ENCODE measurements at regions of chr2 and their contacts with region 1.

Region 1: GRCh38 chr2:188291617-188292347 is at the start of gene GULP1:
- DNase-seq: peak; percentile 70

Region 2: DNA sequence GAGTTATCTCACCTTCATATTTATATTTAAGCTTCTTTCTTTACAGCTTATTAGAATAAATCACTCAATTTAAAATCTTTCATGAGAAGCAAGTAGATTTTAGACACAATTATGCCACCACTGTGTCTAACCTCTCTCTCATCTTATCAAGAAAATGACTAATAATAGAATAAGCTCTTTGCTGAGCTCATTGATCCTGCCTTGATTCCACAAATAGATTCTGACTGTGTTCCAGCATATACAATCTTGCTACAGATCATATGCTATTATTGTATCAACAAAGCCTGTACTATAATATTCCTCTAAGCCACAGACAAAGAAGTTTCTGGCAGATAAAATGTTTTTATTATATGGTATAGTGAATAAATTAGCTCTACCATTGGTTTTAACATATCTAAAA is 168.8 kb before region 1 on chr2:
- CTCF ChIA-PET with region 1: no interaction called
- POLR2A ChIA-PET with region 1: no interaction called
- DNase-seq: no peak

Region 3: GRCh38 chr2:188181067-188181838 is 110.5 kb before region 1 on chr2:
- CTCF ChIA-PET with region 1: no interaction called
- POLR2A ChIA-PET with region 1: no interaction called
- DNase-seq: no peak

Region 4: GRCh38 chr2:188280811-188281222 is 11.0 kb before region 1 on chr2:
- CTCF ChIA-PET with region 1: interaction called, 6 read pairs
- POLR2A ChIA-PET with region 1: interaction called, 14 read pairs
- DNase-seq: no peak

Region 5: DNA sequence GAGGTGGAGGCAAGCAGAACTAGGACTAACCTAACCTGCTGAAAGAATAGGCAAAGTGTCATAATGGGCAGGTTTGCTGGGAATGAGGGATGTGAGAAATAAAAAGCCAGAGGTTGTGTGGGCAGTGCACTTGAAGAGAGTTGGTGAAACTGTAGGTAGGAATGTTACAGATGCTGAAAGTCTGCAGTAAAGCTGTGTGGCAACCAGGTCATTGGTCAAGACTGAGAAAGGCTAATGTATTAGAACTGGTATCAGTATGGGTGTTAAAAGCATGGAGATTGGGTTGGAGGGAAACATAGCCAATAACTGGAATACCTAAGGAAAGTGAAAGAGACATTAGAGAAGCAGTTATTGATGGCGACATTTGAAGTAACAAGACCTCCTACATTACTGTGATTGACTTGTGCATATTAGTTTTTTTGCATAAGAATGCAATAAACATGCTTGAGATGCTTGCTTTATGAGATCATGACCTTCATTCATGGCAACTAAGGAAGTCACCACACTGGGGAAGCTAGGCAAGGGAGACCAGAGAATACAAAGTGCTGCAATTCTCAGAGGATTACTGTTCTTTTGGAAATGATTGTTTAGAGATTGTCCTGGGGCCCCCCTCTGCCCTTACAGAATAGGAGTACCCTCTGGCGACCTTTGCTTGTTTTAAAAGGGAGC is 11.7 kb after region 1 on chr2:
- CTCF ChIA-PET with region 1: no interaction called
- POLR2A ChIA-PET with region 1: interaction called, 13 read pairs
- DNase-seq: no peak

Region 6: GRCh38 chr2:188319830-188320229 is 28.0 kb after region 1 on chr2:
- CTCF ChIA-PET with region 1: interaction called, 3 read pairs
- POLR2A ChIA-PET with region 1: interaction called, 31 read pairs
- DNase-seq: peak; percentile 13

Region 7: DNA sequence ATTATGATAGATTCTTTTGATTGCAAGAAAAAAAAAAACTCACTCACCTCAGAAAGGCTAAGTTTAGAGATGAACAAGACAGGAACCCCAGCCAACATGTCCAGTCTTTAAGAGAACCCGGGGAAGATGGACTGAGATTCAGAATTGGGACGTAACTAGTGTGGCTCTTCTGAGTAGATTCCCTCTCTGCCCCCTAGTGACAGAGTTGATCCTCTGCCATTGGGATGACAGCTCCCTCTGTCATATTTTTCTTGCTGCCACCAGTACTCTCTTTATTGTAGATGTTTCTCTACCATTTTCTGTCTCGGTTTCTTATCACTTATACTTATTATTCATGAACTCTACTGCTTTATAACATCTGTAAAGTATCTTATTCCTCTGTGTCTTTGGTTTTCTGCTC is 77.6 kb after region 1 on chr2:
- CTCF ChIA-PET with region 1: interaction called, 5 read pairs
- POLR2A ChIA-PET with region 1: interaction called, 13 read pairs
- DNase-seq: peak; percentile 63